ENCODE measurements at regions of chr13 and their contacts with region 1.

Region 1: DNA sequence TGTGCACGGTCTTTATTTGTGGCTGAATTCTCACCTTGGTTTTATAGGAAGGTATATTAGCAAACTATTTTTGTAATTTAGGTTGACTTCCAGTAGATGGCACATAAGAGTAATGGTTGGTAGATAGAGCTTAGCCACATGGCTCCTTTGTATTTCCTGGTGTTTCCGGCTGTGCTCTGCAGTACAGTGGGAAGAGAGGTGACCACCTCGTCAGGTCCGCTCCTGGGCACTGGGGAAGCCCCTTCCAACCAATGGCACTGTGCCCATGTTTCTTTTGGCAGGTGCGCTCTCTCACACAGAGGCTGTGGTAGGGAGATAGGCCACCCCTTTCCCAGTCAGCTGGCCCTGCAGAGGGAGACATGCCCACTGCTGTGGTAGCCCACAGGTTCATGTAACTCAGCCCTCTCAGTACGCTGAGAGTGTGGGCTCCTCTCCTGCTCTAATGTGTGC is 74.3 kb upstream of the ATP12A start:
- DNase-seq: peak in 5 of 9 donors; percentile 24 to 50 (median 39)
- ATAC-seq: peak; percentile 76
- H3K4me3 ChIP-seq: no peak overlapping the region
- H3K4me3 Mint-ChIP-seq: no peak overlapping the region
- H3K27ac ChIP-seq: no peak overlapping the region
- H3K27ac Mint-ChIP-seq: no peak overlapping the region
- H3K4me1 ChIP-seq: no peaks in the 10 kb centered on the region
- H3K4me1 Mint-ChIP-seq: peaks cover 0 to 10% (median 0%) of the 10 kb centered on the region in 7 donors
- H3K27me3 ChIP-seq: no peaks in the 10 kb centered on the region
- H3K27me3 Mint-ChIP-seq: no peaks in the 10 kb centered on the region

Region 2: GRCh38 chr13:24557081-24557480 is 48.9 kb before region 1 on chr13:
- CTCF ChIA-PET with region 1: no interaction called
- POLR2A ChIA-PET with region 1: no interaction called
- intact Hi-C with region 1: no loop called
- DNase-seq: no peak
- ATAC-seq: no peak
- H3K4me3 ChIP-seq: no peak overlapping the region
- H3K4me3 Mint-ChIP-seq: no peak overlapping the region
- H3K27ac ChIP-seq: no peak overlapping the region
- H3K27ac Mint-ChIP-seq: no peak overlapping the region
- H3K4me1 ChIP-seq: no peaks in the 10 kb centered on the region
- H3K4me1 Mint-ChIP-seq: peaks cover 0 to 12% (median 9%) of the 10 kb centered on the region in 7 donors
- H3K27me3 ChIP-seq: no peaks in the 10 kb centered on the region
- H3K27me3 Mint-ChIP-seq: peaks cover 44 to 61% (median 57%) of the 10 kb centered on the region in 5 donors

Region 3: DNA sequence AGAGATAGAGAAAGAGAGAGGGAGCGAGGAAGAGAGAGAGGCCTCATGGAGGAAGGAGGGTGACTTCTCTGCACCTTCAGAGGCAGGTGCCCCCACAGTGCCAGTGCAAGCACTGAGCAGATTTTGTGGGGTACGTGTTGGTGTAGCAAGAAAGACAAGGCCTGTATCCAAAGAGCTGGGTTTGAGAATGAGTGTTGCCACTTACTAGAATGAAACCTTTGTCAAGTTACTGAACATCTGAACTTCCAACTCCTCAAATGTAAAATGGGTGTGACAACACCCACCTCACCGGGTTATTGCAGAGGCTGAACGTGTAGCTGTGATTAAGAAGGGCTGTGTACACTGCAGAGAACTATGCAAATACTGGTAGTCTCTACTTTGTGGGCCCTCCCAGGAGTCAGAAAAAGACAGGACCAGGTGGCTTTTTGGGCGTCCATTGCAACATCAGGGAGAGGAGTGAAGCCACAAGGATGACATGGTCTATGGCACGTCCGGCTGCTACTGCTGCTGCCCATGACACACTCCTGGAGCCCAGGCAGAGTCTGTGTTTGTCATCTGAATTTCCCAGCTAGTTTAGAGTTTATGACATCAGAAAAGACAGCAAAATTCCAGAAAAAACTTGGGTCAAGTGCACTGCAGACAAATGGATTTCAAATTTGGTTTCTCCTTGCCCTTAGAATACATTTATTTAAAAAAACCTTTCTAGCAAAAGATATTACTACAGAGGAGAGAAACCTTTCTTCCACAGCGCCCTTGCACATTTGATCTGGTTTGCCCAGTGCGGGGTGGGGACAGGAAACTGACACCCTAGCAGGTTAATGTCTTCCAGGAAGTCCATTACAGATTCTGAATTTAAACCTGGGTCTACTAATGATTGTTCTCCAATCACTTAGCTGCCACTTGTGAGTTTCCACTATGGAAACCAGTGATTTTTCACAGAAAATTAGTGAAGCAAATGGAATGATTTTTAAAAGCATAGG is 20.2 kb after region 1 on chr13:
- CTCF ChIA-PET with region 1: interaction called, 3 read pairs
- POLR2A ChIA-PET with region 1: interaction called, 4 read pairs
- intact Hi-C with region 1: loop called in 1 of 2 experiments (anchors 1 kb)
- DNase-seq: peak in 4 of 9 donors; percentile 12 to 21 (median 16)
- ATAC-seq: peak; percentile 55
- H3K4me3 ChIP-seq: peak overlapping the region; percentile 43
- H3K4me3 Mint-ChIP-seq: peak overlapping the region; percentile 3 to 75 (median 57)
- H3K27ac ChIP-seq: peak overlapping the region; percentile 4
- H3K27ac Mint-ChIP-seq: peak overlapping the region; percentile 60 to 92 (median 81)
- H3K4me1 ChIP-seq: peaks cover 18 to 28% of the 10 kb centered on the region in 2 donors
- H3K4me1 Mint-ChIP-seq: peaks cover 17 to 44% (median 32%) of the 10 kb centered on the region in 7 donors
- H3K27me3 ChIP-seq: no peaks in the 10 kb centered on the region
- H3K27me3 Mint-ChIP-seq: no peaks in the 10 kb centered on the region

Region 4: GRCh38 chr13:24671386-24672107 is 65.6 kb after region 1 on chr13:
- CTCF ChIA-PET with region 1: interaction called, 21 read pairs
- POLR2A ChIA-PET with region 1: no interaction called
- intact Hi-C with region 1: loop called (anchors 1 kb)
- DNase-seq: peak in 1 of 9 donors; percentile 22
- ATAC-seq: peak; percentile 64
- H3K4me3 ChIP-seq: no peak overlapping the region
- H3K4me3 Mint-ChIP-seq: peak overlapping the region in 7 of 10 donors; percentile 7 to 58 (median 46)
- H3K27ac ChIP-seq: no peak overlapping the region
- H3K27ac Mint-ChIP-seq: peak overlapping the region in 1 of 9 donors; percentile 59
- H3K4me1 ChIP-seq: no peaks in the 10 kb centered on the region
- H3K4me1 Mint-ChIP-seq: peaks cover 7 to 12% (median 9%) of the 10 kb centered on the region in 7 donors
- H3K27me3 ChIP-seq: no peaks in the 10 kb centered on the region
- H3K27me3 Mint-ChIP-seq: peaks cover 6 to 49% (median 14%) of the 10 kb centered on the region in 5 donors

Measured in naive thymus-derived CD4-positive, alpha-beta T cell (primary cell).